CD4-positive, alpha-beta memory T cell (primary cell): ENCODE measurements at regions of chr2 and their contacts with region 1.

Region 1: DNA sequence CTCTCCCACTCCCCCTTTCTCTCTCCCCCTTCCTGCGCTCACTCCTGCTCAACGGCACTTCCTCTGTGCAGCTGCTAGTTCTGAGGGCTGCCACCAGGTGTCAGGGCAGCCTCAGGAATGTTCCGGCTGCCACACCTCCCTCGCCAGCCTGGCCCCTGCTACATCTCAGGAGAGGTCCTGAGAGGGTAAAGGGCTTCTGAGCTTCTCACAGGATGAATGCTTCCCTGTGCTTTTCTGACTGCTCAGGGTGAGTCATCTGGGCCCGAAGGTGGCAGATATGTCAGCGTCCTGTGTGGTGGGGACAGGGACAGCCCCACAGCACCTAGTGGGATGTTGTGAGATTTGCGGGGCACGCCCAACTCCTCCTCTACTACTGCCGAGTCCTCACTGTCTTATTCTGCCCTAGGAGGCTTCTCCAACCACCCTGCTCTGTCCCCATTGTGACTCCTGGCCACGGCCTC is 49.0 kb downstream of the PLEKHB2 start:
- DNase-seq: peak; percentile 61 to 81 (median 66)
- H3K4me3 ChIP-seq: no peak overlapping the region
- H3K4me3 Mint-ChIP-seq: peak overlapping the region in 3 of 8 donors; percentile 7 to 59 (median 56)
- H3K27ac ChIP-seq: no peak overlapping the region
- H3K27ac Mint-ChIP-seq: peak overlapping the region in 5 of 7 donors; percentile 35 to 70 (median 56)
- H3K4me1 ChIP-seq: peaks cover 17% of the 10 kb centered on the region
- H3K4me1 Mint-ChIP-seq: peaks cover 11 to 27% (median 21%) of the 10 kb centered on the region in 4 donors
- H3K27me3 ChIP-seq: no peaks in the 10 kb centered on the region
- H3K27me3 Mint-ChIP-seq: no peaks in the 10 kb centered on the region

Region 2: DNA sequence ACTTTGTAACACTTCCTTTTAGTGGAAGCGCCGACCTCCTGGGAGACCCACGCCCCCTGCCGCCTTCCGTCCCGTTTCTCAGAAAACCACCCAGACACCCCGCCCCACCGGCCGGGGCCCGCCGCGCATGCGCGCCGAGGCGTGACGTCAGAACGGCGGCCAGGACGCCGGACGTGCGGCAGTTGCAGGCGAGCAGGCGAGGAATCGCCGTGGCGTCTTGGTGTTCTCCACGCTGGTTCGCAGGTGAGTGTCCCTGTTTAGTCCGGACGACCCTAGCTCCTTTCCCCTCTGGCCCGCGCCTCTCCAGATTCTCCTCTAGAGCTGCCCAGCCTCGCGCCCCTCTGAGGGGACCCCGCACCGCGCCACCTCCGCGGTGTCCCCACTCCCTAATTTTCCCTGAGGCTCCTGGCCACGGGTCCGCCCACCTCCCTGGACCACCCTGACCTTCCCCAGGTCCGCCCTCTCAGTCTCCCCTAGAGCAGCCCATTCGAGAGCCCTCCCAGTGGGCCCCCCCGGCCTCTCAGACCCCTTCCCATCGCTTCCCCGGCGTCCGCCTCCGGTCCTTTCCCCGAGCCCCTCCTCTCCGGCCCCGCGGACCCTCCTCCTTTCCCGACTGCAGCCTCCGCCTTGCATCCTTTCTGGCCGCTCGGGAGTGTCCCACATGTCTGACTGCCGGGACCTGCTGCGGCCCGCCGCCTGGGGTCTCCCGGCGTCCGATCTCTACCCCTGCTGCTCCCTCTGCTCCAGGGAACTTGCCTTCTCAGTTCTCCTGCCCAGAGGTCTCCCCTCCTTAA is 48.7 kb before region 1 on chr2 and contains the start of gene PLEKHB2:
- CTCF ChIA-PET with region 1: no interaction called
- POLR2A ChIA-PET with region 1: no interaction called
- intact Hi-C with region 1: loop called (anchors 5 kb)
- DNase-seq: peak; percentile 89 to 97 (median 92)
- H3K4me3 ChIP-seq: peak within 1 kb of the TSS; percentile 90 to 91
- H3K4me3 Mint-ChIP-seq: peak within 1 kb of the TSS; percentile 94 to 99 (median 98)
- H3K27ac ChIP-seq: peak within 1 kb of the TSS; percentile 95
- H3K27ac Mint-ChIP-seq: peak within 1 kb of the TSS; percentile 92 to 99 (median 97)
- H3K4me1 ChIP-seq: peaks cover 45% of the 10 kb centered on the region
- H3K4me1 Mint-ChIP-seq: peaks cover 34 to 59% (median 45%) of the 10 kb centered on the region in 4 donors
- H3K27me3 ChIP-seq: no peaks in the 10 kb centered on the region
- H3K27me3 Mint-ChIP-seq: no peaks in the 10 kb centered on the region
- total RNA-seq, gene PLEKHB2: 45.5 to 48.3 TPM

Region 3: GRCh38 chr2:131168538-131168937 is 14.4 kb after region 1 on chr2:
- CTCF ChIA-PET with region 1: no interaction called
- POLR2A ChIA-PET with region 1: no interaction called
- intact Hi-C with region 1: no loop called
- DNase-seq: no peak
- H3K4me3 ChIP-seq: no peak overlapping the region
- H3K4me3 Mint-ChIP-seq: no peak overlapping the region
- H3K27ac ChIP-seq: no peak overlapping the region
- H3K27ac Mint-ChIP-seq: no peak overlapping the region
- H3K4me1 ChIP-seq: no peaks in the 10 kb centered on the region
- H3K4me1 Mint-ChIP-seq: no peaks in the 10 kb centered on the region
- H3K27me3 ChIP-seq: no peaks in the 10 kb centered on the region
- H3K27me3 Mint-ChIP-seq: peaks cover 5 to 6% of the 10 kb centered on the region in 2 donors

Region 4: DNA sequence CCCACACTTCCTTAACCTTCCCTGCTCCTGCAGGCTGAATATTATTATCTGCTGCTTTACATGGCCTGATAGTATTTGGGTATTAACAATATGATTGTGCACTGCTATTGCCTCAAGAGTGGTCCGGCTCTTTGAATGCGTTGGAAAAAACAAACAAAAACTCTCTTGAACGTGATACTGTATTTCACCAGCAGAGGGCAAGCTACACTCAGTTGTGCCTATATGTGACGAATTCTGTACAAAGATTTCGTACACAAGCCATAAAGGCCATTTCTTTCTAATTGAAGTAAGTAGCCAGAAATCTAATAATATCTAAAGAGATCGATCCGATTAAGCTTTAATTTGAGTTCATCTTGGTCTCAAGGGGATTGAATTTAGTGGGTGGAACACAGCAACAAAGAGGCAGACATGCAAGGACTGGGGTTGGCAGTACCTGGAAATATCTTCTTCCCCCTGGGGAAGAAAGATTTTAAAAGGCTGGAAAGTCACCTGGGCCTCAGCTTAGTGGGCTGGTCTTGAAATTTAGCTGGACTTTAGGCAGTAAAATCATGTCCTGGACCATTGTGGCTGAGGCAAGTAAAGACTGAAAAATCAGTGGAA is 259.1 kb after region 1 on chr2:
- CTCF ChIA-PET with region 1: interaction called, 3 read pairs
- POLR2A ChIA-PET with region 1: no interaction called
- intact Hi-C with region 1: loop called (anchors 2 kb)
- DNase-seq: peak in 4 of 5 donors; percentile 35 to 44 (median 42)
- H3K4me3 ChIP-seq: no peak overlapping the region
- H3K4me3 Mint-ChIP-seq: no peak overlapping the region
- H3K27ac ChIP-seq: no peak overlapping the region
- H3K27ac Mint-ChIP-seq: peak overlapping the region in 1 of 7 donors; percentile 53
- H3K4me1 ChIP-seq: no peaks in the 10 kb centered on the region
- H3K4me1 Mint-ChIP-seq: peaks cover 0 to 1% (median 0%) of the 10 kb centered on the region in 4 donors
- H3K27me3 ChIP-seq: peaks cover 4% of the 10 kb centered on the region
- H3K27me3 Mint-ChIP-seq: peaks cover 9 to 28% of the 10 kb centered on the region in 2 donors

Region 5: DNA sequence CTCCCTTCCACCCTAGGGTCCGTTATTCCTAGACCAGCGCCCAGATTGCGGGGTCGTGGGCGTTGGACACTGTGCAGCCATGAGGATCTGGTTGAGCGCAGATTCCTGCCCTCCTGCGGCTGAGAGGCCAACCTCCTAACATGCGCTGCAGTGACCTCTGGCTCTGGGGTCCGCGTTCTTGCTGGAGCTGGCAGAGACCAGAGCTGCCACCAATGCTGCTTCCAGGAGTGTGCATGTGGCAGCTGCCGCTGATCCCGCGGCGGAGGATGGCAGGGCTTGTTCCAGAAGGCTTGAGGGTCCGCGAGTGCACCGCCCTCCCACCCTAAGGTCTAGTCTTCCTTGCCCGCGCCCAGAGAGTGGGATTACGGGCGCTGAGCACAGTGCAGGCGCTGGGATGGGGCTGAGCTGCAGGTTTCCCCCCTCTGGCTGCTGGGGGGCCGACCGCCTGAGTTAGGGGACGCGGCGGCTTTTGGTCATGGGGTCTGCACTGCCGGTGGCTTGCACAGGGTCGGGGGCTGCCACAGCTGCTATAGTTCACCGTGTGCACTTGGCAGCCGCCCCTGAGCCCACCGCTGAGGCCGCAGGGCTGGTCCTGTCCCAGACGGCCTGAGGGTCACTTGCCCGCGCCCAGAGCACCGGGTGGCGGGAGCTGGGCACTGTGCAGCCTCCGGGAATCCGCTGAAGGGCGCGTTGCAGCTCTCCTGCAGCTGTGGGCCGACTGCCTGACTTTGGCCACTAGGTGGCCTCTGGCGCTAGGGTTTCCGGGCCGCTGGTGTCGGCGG is 519.5 kb after region 1 on chr2:
- CTCF ChIA-PET with region 1: interaction called, 29 read pairs
- POLR2A ChIA-PET with region 1: interaction called, 4 read pairs
- intact Hi-C with region 1: loop called (anchors 1 kb)
- DNase-seq: peak; percentile 39 to 66 (median 52)
- H3K4me3 ChIP-seq: no peak overlapping the region
- H3K4me3 Mint-ChIP-seq: peak overlapping the region; percentile 44 to 78 (median 70)
- H3K27ac ChIP-seq: no peak overlapping the region
- H3K27ac Mint-ChIP-seq: no peak overlapping the region
- H3K4me1 ChIP-seq: peaks cover 17% of the 10 kb centered on the region
- H3K4me1 Mint-ChIP-seq: peaks cover 4 to 7% (median 5%) of the 10 kb centered on the region in 4 donors
- H3K27me3 ChIP-seq: peaks cover 12% of the 10 kb centered on the region
- H3K27me3 Mint-ChIP-seq: peaks cover 6 to 18% of the 10 kb centered on the region in 2 donors

Region 6: DNA sequence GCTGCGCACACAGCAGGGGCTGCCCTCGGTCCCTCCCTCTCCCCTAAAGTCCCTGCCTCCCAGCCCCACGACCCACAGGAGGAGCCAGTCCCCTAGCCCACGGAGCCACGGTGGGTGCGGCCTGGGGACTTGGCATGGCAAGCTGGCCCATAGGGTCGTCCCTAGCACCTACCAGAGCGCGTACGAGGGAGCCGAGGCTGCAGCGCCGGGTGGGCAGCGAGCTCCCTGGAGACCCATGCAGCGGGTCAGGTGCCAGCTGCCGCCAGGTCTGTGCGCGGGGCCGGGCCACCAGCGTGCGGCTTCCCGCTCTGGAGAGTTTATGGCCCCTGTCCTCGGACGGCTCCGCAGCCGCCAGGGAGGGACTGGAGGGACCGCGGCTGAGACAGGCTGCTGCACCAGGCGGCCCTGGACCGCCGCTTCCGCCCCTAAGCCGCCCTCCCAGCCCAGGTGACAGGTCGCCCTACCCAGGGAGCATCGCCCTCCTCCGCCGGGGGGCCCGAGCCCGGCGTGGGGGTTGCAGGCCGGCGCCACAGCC is 647.2 kb after region 1 on chr2:
- CTCF ChIA-PET with region 1: interaction called, 4 read pairs
- POLR2A ChIA-PET with region 1: no interaction called
- intact Hi-C with region 1: loop called (anchors 1 kb)
- DNase-seq: peak in 1 of 5 donors; percentile 0
- H3K4me3 ChIP-seq: no peak overlapping the region
- H3K4me3 Mint-ChIP-seq: peak overlapping the region in 2 of 8 donors; percentile 8 to 52
- H3K27ac ChIP-seq: no peak overlapping the region
- H3K27ac Mint-ChIP-seq: no peak overlapping the region
- H3K4me1 ChIP-seq: peaks cover 7% of the 10 kb centered on the region
- H3K4me1 Mint-ChIP-seq: peaks cover 0 to 9% (median 0%) of the 10 kb centered on the region in 4 donors
- H3K27me3 ChIP-seq: no peaks in the 10 kb centered on the region
- H3K27me3 Mint-ChIP-seq: peaks cover 2 to 4% of the 10 kb centered on the region in 2 donors